Activated T-helper 1 cell treated with anti-CD3 and anti-CD28 coated beads, Interleukin-12 subunit alpha, Interleukin-12 subunit beta, Interleukin-2, Interleukin-4 antibody, amounts not matched to agents 30 ng/mL and 10 ng/mL and 1 ng/mL, durations not matched to agents 14 hours and 24 hours and 36 hours (primary cell): ENCODE measurements at regions of chr5 and their contacts with region 1.

Region 1: GRCh38 chr5:76818844-76819831 is at the start of gene F2RL1:
- DNase-seq: peak; percentile 17
- H3K4me3 Mint-ChIP-seq: peak within 1 kb of the TSS; percentile 74
- H3K27ac Mint-ChIP-seq: no peak within 1 kb of the TSS
- H3K4me1 Mint-ChIP-seq: peaks cover 9% of the 10 kb centered on the region
- H3K27me3 Mint-ChIP-seq: peaks cover 68% of the 10 kb centered on the region
- total RNA-seq, gene F2RL1: 0.26 and 0.32 TPM in 2 replicates

Region 2: DNA sequence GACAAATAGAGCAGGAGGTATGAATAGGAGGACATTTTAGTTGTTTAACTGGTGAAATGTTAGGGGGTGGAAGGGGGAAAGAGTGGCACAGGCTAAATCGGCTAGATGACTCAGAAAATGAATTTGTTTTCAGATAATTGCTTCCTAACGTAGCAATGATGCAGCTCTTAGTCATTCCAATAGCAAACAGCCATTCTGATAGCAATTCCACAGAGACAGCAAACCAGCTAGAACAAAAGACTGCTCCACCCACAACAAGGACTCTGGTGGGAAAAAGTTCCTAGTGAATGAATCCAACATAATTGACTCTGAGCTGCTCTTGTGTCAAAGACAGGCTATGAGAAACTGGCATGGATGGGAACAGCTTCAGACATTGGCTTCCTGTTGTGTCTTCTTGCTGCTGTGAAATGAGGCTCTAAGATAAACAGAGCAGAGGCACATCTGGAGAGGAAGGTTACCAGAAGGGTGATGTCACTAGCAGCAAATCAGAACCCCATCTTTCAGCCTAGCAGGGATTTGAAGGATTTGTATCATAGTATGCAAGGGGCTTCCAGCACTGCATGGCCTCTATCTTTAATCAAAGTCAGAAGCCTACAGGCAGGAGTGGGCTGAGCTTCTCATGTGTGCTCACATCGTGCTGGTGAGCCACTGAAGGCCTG is 28.4 kb before region 1 on chr5:
- intact Hi-C with region 1: loop called (anchors 1 kb)
- DNase-seq: peak; percentile 14
- H3K4me3 Mint-ChIP-seq: no peak overlapping the region
- H3K27ac Mint-ChIP-seq: peak overlapping the region; percentile 68
- H3K4me1 Mint-ChIP-seq: peaks cover 26% of the 10 kb centered on the region
- H3K27me3 Mint-ChIP-seq: no peaks in the 10 kb centered on the region